ENCODE measurements at regions of chr11 and their contacts with region 1.

Region 1: GRCh38 chr11:18000760-18001159 is 12.1 kb downstream of the SERGEF start:
- DNase-seq: peak; percentile 95
- ATAC-seq: peak; percentile 99
- H3K4me3 ChIP-seq: peak overlapping the region in 1 of 3 experiments; percentile 21; a peak in 1 of 6 replicates
- H3K27ac ChIP-seq: peak overlapping the region; percentile 79
- H3K4me1 ChIP-seq: peaks cover 54% of the 10 kb centered on the region
- H3K27me3 ChIP-seq: no peaks in the 10 kb centered on the region
- CTCF ChIP-seq: peak; percentile 47
- EP300 ChIP-seq: peak in 1 of 2 experiments; percentile 75; a peak in 2 of 4 replicates
- POLR2A ChIP-seq: no peak
- RAD21 ChIP-seq: no peak

Region 2: GRCh38 chr11:17986007-17986710 is 14.6 kb before region 1 on chr11:
- CTCF ChIA-PET with region 1: no interaction called
- POLR2A ChIA-PET with region 1: interaction called, 34 read pairs
- in situ Hi-C with region 1: no loop called
- intact Hi-C with region 1: no loop called
- DNase-seq: no peak
- ATAC-seq: peak; percentile 34
- H3K4me3 ChIP-seq: peak overlapping the region in 1 of 3 experiments; percentile 34; a peak in 2 of 6 replicates
- H3K27ac ChIP-seq: peak overlapping the region; percentile 79
- H3K4me1 ChIP-seq: peaks cover 65% of the 10 kb centered on the region
- H3K27me3 ChIP-seq: no peaks in the 10 kb centered on the region
- CTCF ChIP-seq: no peak
- EP300 ChIP-seq: no peak
- POLR2A ChIP-seq: no peak
- RAD21 ChIP-seq: no peak

Region 3: GRCh38 chr11:18027475-18027874 is 26.7 kb after region 1 on chr11:
- CTCF ChIA-PET with region 1: no interaction called
- POLR2A ChIA-PET with region 1: no interaction called
- in situ Hi-C with region 1: no loop called
- intact Hi-C with region 1: no loop called
- DNase-seq: no peak
- ATAC-seq: no peak
- H3K4me3 ChIP-seq: no peak overlapping the region
- H3K27ac ChIP-seq: no peak overlapping the region
- H3K4me1 ChIP-seq: peaks cover 5% of the 10 kb centered on the region; the same call in 1 of the 2 replicates
- H3K27me3 ChIP-seq: no peaks in the 10 kb centered on the region
- CTCF ChIP-seq: no peak
- EP300 ChIP-seq: no peak
- POLR2A ChIP-seq: no peak
- RAD21 ChIP-seq: no peak

Measured in HepG2 (cell line).